Gastrocnemius medialis (tissue), 4 donors: ENCODE measurements at regions of chr15 and their contacts with region 1.

Region 1: DNA sequence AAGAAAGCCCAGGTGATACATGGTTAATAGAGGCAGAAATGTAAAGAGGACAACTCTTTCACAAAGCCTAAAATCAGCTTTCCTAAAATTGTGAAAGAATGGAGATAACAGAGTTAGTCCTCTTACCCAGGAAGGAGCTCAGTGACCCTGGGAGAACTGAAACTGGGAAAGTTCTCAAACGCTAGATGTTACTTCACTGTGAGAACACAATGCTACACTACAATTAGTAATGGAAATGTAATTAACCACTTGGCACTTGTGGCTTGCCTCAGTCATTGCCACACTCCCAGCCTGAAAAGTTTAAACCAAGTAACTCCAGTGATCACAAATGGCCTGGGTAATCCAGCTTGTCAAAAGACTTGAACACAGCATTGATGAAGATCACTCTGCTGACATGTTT is 102.7 kb upstream of the FGF7 start:
- DNase-seq: no peak
- ATAC-seq: no peak
- H3K4me3 ChIP-seq: no peak overlapping the region
- H3K27ac ChIP-seq: no peak overlapping the region
- H3K4me1 ChIP-seq: peaks cover 0 to 3% of the 10 kb centered on the region in 2 donors
- H3K27me3 ChIP-seq: no peaks in the 10 kb centered on the region
- CTCF ChIP-seq: no peak
- POLR2A ChIP-seq: no peak

Region 2: GRCh38 chr15:49101536-49101935 is 218.8 kb before region 1 on chr15:
- in situ Hi-C with region 1: no loop called
- intact Hi-C with region 1: no loop called
- DNase-seq: no peak
- ATAC-seq: no peak
- H3K4me3 ChIP-seq: no peak overlapping the region
- H3K27ac ChIP-seq: no peak overlapping the region
- H3K4me1 ChIP-seq: no peaks in the 10 kb centered on the region
- H3K27me3 ChIP-seq: no peaks in the 10 kb centered on the region
- CTCF ChIP-seq: no peak
- POLR2A ChIP-seq: no peak

Region 3: DNA sequence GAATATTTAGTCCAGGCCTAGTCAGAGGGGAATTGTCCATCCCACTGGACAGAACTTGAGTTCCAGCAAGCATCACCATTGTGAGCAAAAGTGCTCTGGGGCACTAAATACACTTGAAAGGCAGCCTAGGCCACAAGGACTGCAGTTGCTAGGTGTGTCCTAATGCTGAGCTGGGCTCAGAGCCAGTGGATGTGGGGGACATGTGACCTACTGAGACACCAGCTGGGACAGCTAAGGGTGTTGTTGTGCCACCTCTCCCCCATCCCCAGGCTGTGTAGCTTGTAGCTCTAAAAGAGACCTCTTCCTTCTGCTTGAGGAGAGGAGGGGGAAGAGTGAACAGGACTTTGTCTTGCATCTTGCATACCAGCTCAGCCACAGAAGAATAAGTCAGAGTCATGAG is 421.4 kb after region 1 on chr15:
- in situ Hi-C with region 1: no loop called
- intact Hi-C with region 1: loop called (anchors 10 kb)
- DNase-seq: no peak
- ATAC-seq: no peak
- H3K4me3 ChIP-seq: no peak overlapping the region
- H3K27ac ChIP-seq: no peak overlapping the region
- H3K4me1 ChIP-seq: no peaks in the 10 kb centered on the region
- H3K27me3 ChIP-seq: no peaks in the 10 kb centered on the region
- CTCF ChIP-seq: no peak
- POLR2A ChIP-seq: no peak